A549 (cell line): ENCODE measurements at regions of chr18 and their contacts with region 1.

Region 1: DNA sequence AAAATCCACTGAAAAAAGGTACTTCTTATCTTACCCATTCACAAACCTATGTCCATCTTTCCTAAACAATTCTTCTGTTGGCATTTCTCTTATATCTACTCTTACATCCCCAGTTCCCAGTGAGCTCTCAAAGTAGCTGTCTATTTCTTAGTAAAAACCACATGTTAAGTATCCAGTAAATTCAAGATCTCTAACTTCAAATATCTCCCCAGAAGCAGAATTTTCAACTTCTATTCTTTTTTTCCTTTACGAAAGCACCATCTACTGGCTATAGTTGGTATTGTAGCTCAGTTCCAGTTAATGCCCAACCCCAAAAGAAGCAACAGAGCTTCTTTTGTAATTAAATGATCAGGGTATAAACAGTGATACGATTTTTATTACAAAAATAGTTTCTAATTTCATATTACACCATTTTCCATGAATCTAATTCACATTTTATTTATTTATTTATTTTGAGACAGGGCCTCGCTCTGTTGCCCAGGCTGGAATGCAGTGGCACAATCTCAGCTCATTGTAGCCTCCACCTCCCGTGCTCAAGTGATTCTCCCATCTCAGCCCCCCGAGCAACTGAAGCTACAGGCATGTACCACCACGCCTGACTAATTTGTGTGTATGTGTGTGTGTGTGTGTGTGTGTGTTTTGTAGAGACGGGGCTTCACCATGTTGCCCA is 28.5 kb downstream of the HRH4 start:
- DNase-seq: peak; percentile 18 to 21
- ATAC-seq: peak in 1 of 2 experiments; percentile 55; a peak in 2 of 6 replicates
- H3K4me3 ChIP-seq: no peak overlapping the region
- H3K27ac ChIP-seq: no peak overlapping the region
- H3K4me1 ChIP-seq: no peaks in the 10 kb centered on the region
- CTCF ChIP-seq: peak; percentile 55
- EP300 ChIP-seq: no peak
- POLR2A ChIP-seq: no peak
- RAD21 ChIP-seq: peak; percentile 55 to 61

Region 2: DNA sequence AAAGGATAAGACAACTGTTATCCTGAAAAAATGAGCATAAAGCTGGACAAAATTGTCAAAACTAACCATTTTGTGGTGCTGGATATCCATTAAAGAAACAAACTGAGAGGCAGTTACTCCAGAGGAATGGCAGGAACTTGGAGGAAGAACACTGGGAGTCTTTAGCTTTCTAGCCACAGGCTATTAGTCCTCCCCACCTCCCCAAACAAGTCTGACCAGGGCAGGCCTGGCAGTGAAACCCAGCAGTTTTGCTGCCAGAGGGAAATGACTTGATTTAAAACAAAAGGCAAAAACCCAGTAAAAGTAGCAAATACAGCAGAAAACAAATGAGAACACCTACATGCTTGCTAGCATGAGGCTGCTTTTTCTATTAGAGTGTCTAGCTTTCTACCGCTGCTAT is 126.2 kb before region 1 on chr18:
- CTCF ChIA-PET with region 1: interaction called, 57 read pairs
- POLR2A ChIA-PET with region 1: no interaction called
- DNase-seq: no peak
- ATAC-seq: no peak
- H3K4me3 ChIP-seq: no peak overlapping the region
- H3K27ac ChIP-seq: no peak overlapping the region
- H3K4me1 ChIP-seq: no peaks in the 10 kb centered on the region
- CTCF ChIP-seq: no peak
- EP300 ChIP-seq: no peak
- POLR2A ChIP-seq: no peak
- RAD21 ChIP-seq: no peak

Region 3: DNA sequence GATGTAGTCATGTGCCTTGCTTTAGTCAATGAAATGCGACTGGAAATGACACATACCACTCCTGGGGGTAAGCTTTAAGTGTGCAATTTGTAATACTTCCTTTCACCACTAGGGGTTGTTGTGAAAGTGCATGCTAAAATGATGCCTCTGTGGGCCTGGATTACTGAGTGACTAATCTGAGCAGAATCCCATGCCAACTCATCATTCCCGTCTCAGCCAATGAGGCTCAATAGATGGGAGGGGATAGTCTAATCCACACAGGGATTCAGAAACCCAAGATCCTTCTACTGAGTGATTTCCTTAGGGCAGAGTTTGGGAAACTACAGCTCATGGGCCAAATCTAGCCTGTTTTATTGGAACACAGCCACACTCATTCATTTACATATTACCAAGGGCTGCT is 25.5 kb after region 1 on chr18:
- CTCF ChIA-PET with region 1: interaction called, 10 read pairs
- POLR2A ChIA-PET with region 1: no interaction called
- DNase-seq: peak; percentile 48 to 62
- ATAC-seq: peak; percentile 76 to 84; a peak in 5 of 6 replicates
- H3K4me3 ChIP-seq: no peak overlapping the region
- H3K27ac ChIP-seq: no peak overlapping the region
- H3K4me1 ChIP-seq: no peaks in the 10 kb centered on the region
- CTCF ChIP-seq: no peak
- EP300 ChIP-seq: no peak
- POLR2A ChIP-seq: no peak
- RAD21 ChIP-seq: no peak

Region 4: GRCh38 chr18:24656551-24657443 is 167.8 kb after region 1 on chr18:
- CTCF ChIA-PET with region 1: no interaction called
- POLR2A ChIA-PET with region 1: no interaction called
- DNase-seq: no peak
- ATAC-seq: no peak
- H3K4me3 ChIP-seq: no peak overlapping the region
- H3K27ac ChIP-seq: no peak overlapping the region
- H3K4me1 ChIP-seq: no peaks in the 10 kb centered on the region
- CTCF ChIP-seq: no peak
- EP300 ChIP-seq: no peak
- POLR2A ChIP-seq: no peak
- RAD21 ChIP-seq: no peak

Region 5: GRCh38 chr18:25077944-25078723 is 589.2 kb after region 1 on chr18:
- CTCF ChIA-PET with region 1: no interaction called
- POLR2A ChIA-PET with region 1: no interaction called
- DNase-seq: no peak
- ATAC-seq: no peak
- H3K4me3 ChIP-seq: no peak overlapping the region
- H3K27ac ChIP-seq: no peak overlapping the region
- H3K4me1 ChIP-seq: no peaks in the 10 kb centered on the region
- CTCF ChIP-seq: no peak
- EP300 ChIP-seq: no peak
- POLR2A ChIP-seq: no peak
- RAD21 ChIP-seq: no peak